ENCODE measurements at regions of chr6 and their contacts with region 1.

Region 1: DNA sequence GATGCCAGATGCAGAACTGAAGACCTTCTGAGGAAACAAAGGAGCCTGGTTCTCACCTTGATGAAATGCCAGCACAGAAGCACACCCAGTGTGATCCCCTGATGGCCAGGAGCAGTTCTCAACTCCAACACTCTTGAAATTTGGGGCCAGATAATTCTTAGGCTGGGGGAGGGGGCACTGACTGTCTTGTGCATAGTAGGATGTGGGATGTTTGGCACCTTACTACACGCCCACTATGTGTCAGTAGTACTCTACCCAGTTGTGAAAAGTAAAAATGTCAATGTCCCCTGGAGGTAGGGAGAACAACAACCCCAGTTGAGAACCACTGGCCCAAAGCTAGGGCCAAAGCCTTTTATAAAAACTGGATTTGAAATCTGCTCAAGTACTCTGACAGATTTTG is 398.3 kb upstream of the ARID1B start:
- DNase-seq: peak in 4 of 5 donors; percentile 18 to 41 (median 26)
- H3K4me3 ChIP-seq: no peak overlapping the region
- H3K4me3 Mint-ChIP-seq: no peak overlapping the region
- H3K27ac ChIP-seq: no peak overlapping the region
- H3K27ac Mint-ChIP-seq: peak overlapping the region in 4 of 7 donors; percentile 39 to 65 (median 45)
- H3K4me1 ChIP-seq: no peaks in the 10 kb centered on the region
- H3K4me1 Mint-ChIP-seq: peaks cover 0 to 13% (median 2%) of the 10 kb centered on the region in 4 donors
- H3K27me3 ChIP-seq: no peaks in the 10 kb centered on the region
- H3K27me3 Mint-ChIP-seq: peaks cover 0 to 3% of the 10 kb centered on the region in 2 donors

Region 2: GRCh38 chr6:156359912-156360311 is 18.9 kb before region 1 on chr6:
- CTCF ChIA-PET with region 1: no interaction called
- POLR2A ChIA-PET with region 1: no interaction called
- intact Hi-C with region 1: no loop called
- DNase-seq: no peak
- H3K4me3 ChIP-seq: no peak overlapping the region
- H3K4me3 Mint-ChIP-seq: no peak overlapping the region
- H3K27ac ChIP-seq: no peak overlapping the region
- H3K27ac Mint-ChIP-seq: no peak overlapping the region
- H3K4me1 ChIP-seq: no peaks in the 10 kb centered on the region
- H3K4me1 Mint-ChIP-seq: peaks cover 0 to 5% (median 0%) of the 10 kb centered on the region in 4 donors
- H3K27me3 ChIP-seq: no peaks in the 10 kb centered on the region
- H3K27me3 Mint-ChIP-seq: peaks cover 0 to 2% of the 10 kb centered on the region in 2 donors

Region 3: DNA sequence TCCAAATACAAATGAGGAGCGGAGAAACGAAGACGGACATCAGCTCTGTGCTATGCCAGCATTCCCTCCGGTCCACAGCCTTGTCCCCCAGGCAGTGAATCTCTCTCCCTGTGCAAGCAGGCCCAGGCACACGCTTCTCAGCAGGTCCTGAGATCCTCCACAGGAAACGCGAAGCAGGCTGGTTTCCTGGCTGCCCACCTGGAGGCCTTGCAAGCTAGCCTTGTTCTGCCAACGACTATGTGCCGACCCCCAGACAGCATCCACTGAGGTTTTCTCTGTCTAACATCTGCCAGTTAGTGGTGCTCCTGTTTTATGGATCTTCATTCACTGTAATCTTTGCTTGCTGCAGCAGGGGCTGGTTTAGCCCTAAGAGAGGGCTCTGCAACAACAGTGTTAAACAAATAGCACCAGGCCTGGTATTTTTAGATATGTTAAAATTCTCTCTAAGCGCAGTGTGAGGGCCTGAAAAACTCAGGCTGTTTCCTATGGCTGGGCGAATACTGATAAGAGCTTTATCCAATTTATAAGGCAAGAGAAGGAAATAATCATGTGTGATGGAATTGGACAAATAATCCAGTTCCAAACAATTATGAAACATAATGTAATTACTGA is 12.3 kb after region 1 on chr6:
- CTCF ChIA-PET with region 1: interaction called, 5 read pairs
- POLR2A ChIA-PET with region 1: interaction called, 10 read pairs
- intact Hi-C with region 1: loop called (anchors 1 kb)
- DNase-seq: no peak
- H3K4me3 ChIP-seq: no peak overlapping the region
- H3K4me3 Mint-ChIP-seq: peak overlapping the region in 4 of 8 donors; percentile 33 to 74 (median 60)
- H3K27ac ChIP-seq: no peak overlapping the region
- H3K27ac Mint-ChIP-seq: peak overlapping the region in 6 of 7 donors; percentile 50 to 92 (median 77)
- H3K4me1 ChIP-seq: peaks cover 51% of the 10 kb centered on the region
- H3K4me1 Mint-ChIP-seq: peaks cover 32 to 65% (median 46%) of the 10 kb centered on the region in 4 donors
- H3K27me3 ChIP-seq: no peaks in the 10 kb centered on the region
- H3K27me3 Mint-ChIP-seq: no peaks in the 10 kb centered on the region

Region 4: GRCh38 chr6:156686995-156687788 is 308.3 kb after region 1 on chr6:
- CTCF ChIA-PET with region 1: no interaction called
- POLR2A ChIA-PET with region 1: no interaction called
- intact Hi-C with region 1: no loop called
- DNase-seq: peak; percentile 80 to 90 (median 85)
- H3K4me3 ChIP-seq: peak overlapping the region; percentile 68 to 92
- H3K4me3 Mint-ChIP-seq: peak overlapping the region; percentile 88 to 95 (median 92)
- H3K27ac ChIP-seq: peak overlapping the region; percentile 95
- H3K27ac Mint-ChIP-seq: peak overlapping the region; percentile 88 to 98 (median 97)
- H3K4me1 ChIP-seq: peaks cover 14% of the 10 kb centered on the region
- H3K4me1 Mint-ChIP-seq: peaks cover 10 to 24% (median 15%) of the 10 kb centered on the region in 4 donors
- H3K27me3 ChIP-seq: peaks cover 4% of the 10 kb centered on the region
- H3K27me3 Mint-ChIP-seq: no peaks in the 10 kb centered on the region

Region 5: DNA sequence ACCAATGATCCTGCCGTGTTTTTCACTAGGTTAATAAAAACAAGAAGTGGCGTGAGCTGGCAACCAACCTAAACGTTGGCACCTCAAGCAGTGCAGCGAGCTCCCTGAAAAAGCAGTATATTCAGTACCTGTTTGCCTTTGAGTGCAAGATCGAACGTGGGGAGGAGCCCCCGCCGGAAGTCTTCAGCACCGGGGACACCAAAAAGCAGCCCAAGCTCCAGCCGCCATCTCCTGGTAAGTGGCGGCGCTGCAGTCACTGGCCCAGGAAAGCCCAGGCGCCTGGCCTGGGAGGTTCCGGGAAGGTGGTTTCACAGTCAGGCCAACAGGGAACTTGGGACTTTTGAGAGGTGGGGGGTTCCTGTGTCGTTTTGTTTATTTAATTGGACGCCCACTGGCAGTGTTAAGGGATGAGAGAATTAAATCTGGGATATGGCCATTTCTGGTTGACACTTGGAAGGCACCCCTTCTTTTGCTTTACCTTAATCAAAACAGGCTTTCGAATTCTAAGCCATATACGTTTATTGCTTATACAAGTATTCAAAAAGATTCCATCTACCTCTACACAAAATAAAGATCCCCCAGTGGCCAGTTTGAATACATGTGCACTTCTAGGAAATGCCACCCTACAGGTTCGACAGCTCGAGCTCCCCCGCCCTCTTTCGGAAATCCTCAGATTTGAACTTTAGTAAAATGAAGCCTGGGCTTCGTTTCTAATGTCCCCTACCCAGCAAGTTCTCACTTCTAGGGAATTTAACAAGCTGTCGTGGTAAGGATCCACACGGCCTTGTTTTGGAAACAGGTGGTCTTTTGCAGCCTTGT is 805.6 kb after region 1 on chr6:
- CTCF ChIA-PET with region 1: no interaction called
- POLR2A ChIA-PET with region 1: no interaction called
- intact Hi-C with region 1: loop called (anchors 10 kb)
- DNase-seq: peak; percentile 55 to 60 (median 58)
- H3K4me3 ChIP-seq: no peak overlapping the region
- H3K4me3 Mint-ChIP-seq: peak overlapping the region in 4 of 8 donors; percentile 32 to 43 (median 38)
- H3K27ac ChIP-seq: no peak overlapping the region
- H3K27ac Mint-ChIP-seq: peak overlapping the region in 4 of 7 donors; percentile 59 to 70 (median 62)
- H3K4me1 ChIP-seq: peaks cover 18% of the 10 kb centered on the region
- H3K4me1 Mint-ChIP-seq: peaks cover 11 to 36% (median 23%) of the 10 kb centered on the region in 4 donors
- H3K27me3 ChIP-seq: no peaks in the 10 kb centered on the region
- H3K27me3 Mint-ChIP-seq: no peaks in the 10 kb centered on the region

Measured in CD4-positive, alpha-beta memory T cell (primary cell).